Activated CD8-positive, alpha-beta T cell treated with anti-CD3 and anti-CD28 coated beads, Interleukin-2, amount 10 ng/mL, durations not matched to agents 7 days and 5 days (primary cell): ENCODE measurements at regions of chr6 and their contacts with region 1.

Region 1: DNA sequence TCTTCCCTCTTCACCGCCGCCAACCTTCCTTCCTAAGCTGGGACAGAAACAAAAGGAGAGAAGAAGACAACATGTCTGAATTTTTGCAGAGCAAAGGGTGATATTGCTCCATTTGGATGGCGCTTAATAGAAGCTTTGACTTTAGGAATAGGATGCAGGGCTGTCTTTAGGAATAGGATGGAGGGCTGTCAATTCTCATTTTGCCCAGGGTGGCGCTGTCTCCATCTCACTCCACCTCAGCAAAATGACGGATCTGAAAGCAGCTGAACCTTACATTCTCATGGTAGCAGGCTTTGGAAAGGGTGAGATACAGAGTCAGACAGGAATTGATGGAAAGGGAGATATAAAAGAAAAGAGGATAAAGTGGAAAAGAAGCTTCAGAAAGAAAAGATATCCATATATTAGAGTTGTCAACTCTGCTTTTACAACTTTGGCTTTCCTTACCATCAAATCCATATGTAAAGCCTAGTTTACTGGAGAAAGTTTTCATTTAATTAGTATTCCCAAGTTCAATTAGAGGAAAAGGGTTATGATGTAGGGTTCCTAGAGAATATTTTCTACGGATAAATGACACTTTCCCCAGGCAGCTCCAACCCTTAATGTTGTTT is 2.4 kb downstream of the MTCL3 start:
- DNase-seq: peak; percentile 63
- ATAC-seq: peak; percentile 51
- H3K4me3 Mint-ChIP-seq: peak overlapping the region; percentile 85
- H3K27ac Mint-ChIP-seq: peak overlapping the region; percentile 63
- H3K4me1 Mint-ChIP-seq: peaks cover 44% of the 10 kb centered on the region
- H3K27me3 Mint-ChIP-seq: peaks cover 38% of the 10 kb centered on the region

Region 2: DNA sequence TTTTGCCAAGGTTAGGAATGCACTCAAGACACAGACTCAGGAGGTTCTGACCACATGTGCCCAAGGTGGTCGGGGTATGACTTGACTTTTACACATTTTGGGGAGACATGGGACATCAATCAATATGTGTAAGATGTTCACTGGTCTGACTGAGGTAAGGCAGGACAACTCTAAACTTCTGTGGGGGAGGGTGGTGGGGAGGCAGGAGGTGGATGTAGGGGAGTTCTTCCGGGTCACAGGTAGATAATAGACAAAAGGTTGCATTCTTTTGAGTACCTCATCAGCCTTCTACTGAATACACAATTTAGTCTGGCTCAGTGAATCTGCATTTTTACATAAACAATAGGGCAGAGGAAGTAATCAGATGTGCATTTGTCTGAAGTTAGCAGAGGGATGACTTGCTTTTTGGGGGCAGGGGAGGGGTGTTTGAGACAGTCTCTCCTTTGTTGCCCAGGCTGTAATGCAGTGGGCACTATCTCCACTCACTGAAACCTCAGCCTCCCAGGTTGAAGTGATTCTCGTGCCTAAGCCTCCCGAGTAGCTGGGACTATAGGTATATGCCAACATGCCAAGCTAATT is 184.3 kb before region 1 on chr6:
- CTCF ChIA-PET with region 1: interaction called, 11 read pairs
- POLR2A ChIA-PET with region 1: no interaction called
- DNase-seq: no peak
- ATAC-seq: no peak
- H3K4me3 Mint-ChIP-seq: no peak overlapping the region
- H3K27ac Mint-ChIP-seq: no peak overlapping the region
- H3K4me1 Mint-ChIP-seq: peaks cover 4% of the 10 kb centered on the region
- H3K27me3 Mint-ChIP-seq: no peaks in the 10 kb centered on the region

Region 3: GRCh38 chr6:127459231-127459641 is 57.5 kb before region 1 on chr6 and contains the start of gene KIAA0408:
- CTCF ChIA-PET with region 1: interaction called, 19 read pairs
- POLR2A ChIA-PET with region 1: no interaction called
- DNase-seq: no peak
- ATAC-seq: no peak
- H3K4me3 Mint-ChIP-seq: no peak within 1 kb of the TSS
- H3K27ac Mint-ChIP-seq: no peak within 1 kb of the TSS
- H3K4me1 Mint-ChIP-seq: peaks cover 11% of the 10 kb centered on the region
- H3K27me3 Mint-ChIP-seq: peaks cover 7% of the 10 kb centered on the region
- total RNA-seq, gene KIAA0408: 2.6 to 3.1 TPM

Region 4: GRCh38 chr6:127484212-127484858 is 32.4 kb before region 1 on chr6:
- CTCF ChIA-PET with region 1: interaction called, 203 read pairs
- POLR2A ChIA-PET with region 1: interaction called, 22 read pairs
- DNase-seq: peak; percentile 24
- ATAC-seq: peak; percentile 98
- H3K4me3 Mint-ChIP-seq: peak overlapping the region; percentile 54
- H3K27ac Mint-ChIP-seq: peak overlapping the region; percentile 87
- H3K4me1 Mint-ChIP-seq: peaks cover 36% of the 10 kb centered on the region
- H3K27me3 Mint-ChIP-seq: no peaks in the 10 kb centered on the region

Region 5: DNA sequence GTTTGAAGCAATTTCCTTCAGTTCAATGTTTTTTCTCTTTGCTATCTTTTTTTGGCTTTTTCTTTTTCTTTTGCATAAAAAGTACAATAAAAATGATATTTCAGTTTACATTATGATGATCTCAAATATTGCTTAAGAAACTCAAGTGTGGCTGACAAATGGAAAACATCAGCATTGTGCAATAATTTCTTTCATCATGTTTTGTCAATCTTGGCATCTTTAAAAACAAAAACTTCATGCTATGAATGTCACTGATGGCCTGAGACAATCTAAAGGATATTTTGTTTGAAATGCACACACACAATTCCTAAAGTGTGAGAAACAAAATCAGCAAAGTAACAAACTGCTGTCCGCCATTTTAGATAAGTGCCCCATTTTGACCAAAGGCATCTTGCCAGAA is 16.2 kb after region 1 on chr6:
- CTCF ChIA-PET with region 1: interaction called, 31 read pairs
- POLR2A ChIA-PET with region 1: interaction called, 5 read pairs
- DNase-seq: no peak
- ATAC-seq: no peak
- H3K4me3 Mint-ChIP-seq: no peak overlapping the region
- H3K27ac Mint-ChIP-seq: no peak overlapping the region
- H3K4me1 Mint-ChIP-seq: no peaks in the 10 kb centered on the region
- H3K27me3 Mint-ChIP-seq: peaks cover 32% of the 10 kb centered on the region

Region 6: GRCh38 chr6:127561660-127562059 is 44.9 kb after region 1 on chr6:
- CTCF ChIA-PET with region 1: no interaction called
- POLR2A ChIA-PET with region 1: no interaction called
- DNase-seq: no peak
- ATAC-seq: no peak
- H3K4me3 Mint-ChIP-seq: no peak overlapping the region
- H3K27ac Mint-ChIP-seq: no peak overlapping the region
- H3K4me1 Mint-ChIP-seq: no peaks in the 10 kb centered on the region
- H3K27me3 Mint-ChIP-seq: peaks cover 12% of the 10 kb centered on the region